ENCODE measurements at regions of chr7 and their contacts with region 1.

Region 1: GRCh38 chr7:35781200-35781701 is 19.6 kb upstream of the SEPTIN7 start:
- DNase-seq: no peak
- H3K4me3 ChIP-seq: no peak overlapping the region
- H3K27ac ChIP-seq: no peak overlapping the region
- H3K4me1 ChIP-seq: no peaks in the 10 kb centered on the region
- H3K27me3 ChIP-seq: no peaks in the 10 kb centered on the region
- CTCF ChIP-seq: no peak
- POLR2A ChIP-seq: no peak

Region 2: DNA sequence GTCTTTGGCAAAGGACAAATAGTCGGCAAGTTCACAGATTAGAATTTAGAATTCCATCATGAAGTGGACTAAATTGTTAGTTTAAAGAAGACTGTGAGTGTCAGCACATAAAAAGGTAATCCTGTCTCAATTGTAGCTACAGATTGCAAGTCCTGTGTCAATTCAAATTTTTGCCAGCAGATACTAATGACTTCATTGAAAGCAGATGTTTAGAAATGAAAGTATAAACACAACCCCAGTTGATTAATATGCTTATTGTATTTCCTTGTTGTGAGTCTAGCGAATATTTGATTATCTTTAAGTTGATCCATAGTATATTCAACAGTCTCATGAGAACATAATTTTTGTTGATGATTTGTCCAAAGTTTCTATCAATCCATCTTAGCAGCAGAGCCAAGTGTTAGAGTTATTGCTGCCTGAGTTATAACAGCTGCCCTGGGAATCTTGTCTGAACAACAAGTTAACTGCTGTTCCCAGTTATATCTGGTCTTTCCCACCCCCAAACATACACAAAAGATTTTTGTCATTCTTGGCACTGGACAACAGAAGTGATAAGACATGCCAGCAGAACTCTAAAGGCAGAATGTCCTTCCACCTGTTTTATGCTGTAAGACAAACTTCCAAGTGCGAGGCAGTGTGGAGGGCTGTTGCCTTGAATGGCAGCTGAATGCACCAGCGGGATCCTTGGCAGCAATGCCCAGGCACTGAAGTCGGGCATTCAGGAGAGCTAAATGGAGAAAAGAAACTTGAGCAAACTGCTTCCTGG is 65.0 kb before region 1 on chr7:
- intact Hi-C with region 1: loop called (anchors 10 kb)
- DNase-seq: peak; percentile 62 to 77
- H3K4me3 ChIP-seq: no peak overlapping the region
- H3K27ac ChIP-seq: no peak overlapping the region
- H3K4me1 ChIP-seq: peaks cover 5 to 6% of the 10 kb centered on the region in 2 donors
- H3K27me3 ChIP-seq: no peaks in the 10 kb centered on the region
- CTCF ChIP-seq: no peak
- POLR2A ChIP-seq: no peak

Region 3: GRCh38 chr7:36639826-36640225 is 858.6 kb after region 1 on chr7:
- intact Hi-C with region 1: no loop called
- DNase-seq: peak in 1 of 2 donors; percentile 13
- H3K4me3 ChIP-seq: no peak overlapping the region
- H3K27ac ChIP-seq: no peak overlapping the region
- H3K4me1 ChIP-seq: no peaks in the 10 kb centered on the region
- H3K27me3 ChIP-seq: no peaks in the 10 kb centered on the region
- CTCF ChIP-seq: no peak
- POLR2A ChIP-seq: no peak